ENCODE measurements at regions of chr2 and their contacts with region 1.

Region 1: DNA sequence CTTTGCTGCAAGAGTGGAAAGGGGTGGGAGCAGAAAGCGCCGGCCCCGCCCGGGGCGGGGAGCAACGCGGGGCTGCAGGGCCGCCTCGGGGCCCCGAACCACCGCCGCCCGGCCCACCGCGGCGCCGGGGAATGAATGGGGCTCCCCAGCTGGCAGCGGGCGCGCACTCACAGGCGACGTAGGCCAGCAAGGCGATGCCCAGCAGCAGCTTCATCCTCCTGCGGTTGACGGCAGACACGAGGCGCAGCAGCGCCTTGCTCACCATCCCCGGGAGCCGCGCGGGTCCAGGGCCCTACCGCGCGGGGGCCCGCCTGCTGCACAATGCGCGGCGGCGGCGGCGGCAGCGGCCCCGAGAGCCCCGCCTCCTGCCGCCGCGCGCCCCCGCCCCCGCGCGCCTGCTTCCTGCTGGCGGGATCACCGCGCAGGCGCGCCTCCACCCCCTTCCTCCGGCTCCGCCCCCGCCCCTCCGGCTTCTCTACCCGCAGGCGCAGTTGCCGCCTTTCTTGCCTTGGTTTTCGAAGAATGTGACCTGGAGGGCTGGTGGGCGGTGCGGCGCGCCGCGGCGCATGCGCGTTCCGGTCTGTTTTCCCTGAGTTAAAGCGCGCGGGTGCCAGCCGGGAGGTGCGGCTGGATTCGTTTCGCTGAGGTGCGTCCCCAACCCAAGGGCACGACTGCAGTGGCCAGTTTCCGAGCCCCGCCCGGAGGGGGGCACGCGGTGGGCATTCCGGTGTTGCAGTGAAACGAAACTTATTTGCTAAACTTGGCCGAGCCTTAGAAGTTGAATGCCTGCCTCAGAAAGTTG is at the start of gene UXS1:
- DNase-seq: peak; percentile 98
- ATAC-seq: peak; percentile 80
- H3K4me3 ChIP-seq: peak within 1 kb of the TSS; percentile 91 to 99 (median 95)
- H3K27ac ChIP-seq: peak within 1 kb of the TSS; percentile 64
- H3K4me1 ChIP-seq: peaks cover 63% of the 10 kb centered on the region
- H3K27me3 ChIP-seq: no peaks in the 10 kb centered on the region; a peak in 1 of 5 replicates
- CTCF ChIP-seq: no peak
- EP300 ChIP-seq: no peak
- POLR2A ChIP-seq: peak; percentile 72 to 87
- RAD21 ChIP-seq: peak; percentile 56
- total RNA-seq, gene UXS1: 35.4 and 53.3 TPM in 2 replicates

Region 2: GRCh38 chr2:105337124-105338019 is 856.8 kb before region 1 on chr2 and contains the start of gene C2orf49:
- CTCF ChIA-PET with region 1: no interaction called
- POLR2A ChIA-PET with region 1: no interaction called
- in situ Hi-C with region 1: loop called (anchors 25 kb)
- intact Hi-C with region 1: no loop called
- DNase-seq: peak; percentile 90
- ATAC-seq: peak; percentile 96
- H3K4me3 ChIP-seq: peak within 1 kb of the TSS; percentile 85 to 100 (median 99)
- H3K27ac ChIP-seq: peak within 1 kb of the TSS; percentile 100
- H3K4me1 ChIP-seq: peaks cover 38% of the 10 kb centered on the region
- H3K27me3 ChIP-seq: peaks cover 0 to 7% of the 10 kb centered on the region in 2 experiments; a peak in 2 of 5 replicates
- CTCF ChIP-seq: no peak
- EP300 ChIP-seq: peak in 1 of 2 experiments; percentile 68; a peak in 2 of 4 replicates
- POLR2A ChIP-seq: peak; percentile 85 to 88
- RAD21 ChIP-seq: no peak
- total RNA-seq, gene C2orf49: 28.8 and 35.6 TPM in 2 replicates

Region 3: DNA sequence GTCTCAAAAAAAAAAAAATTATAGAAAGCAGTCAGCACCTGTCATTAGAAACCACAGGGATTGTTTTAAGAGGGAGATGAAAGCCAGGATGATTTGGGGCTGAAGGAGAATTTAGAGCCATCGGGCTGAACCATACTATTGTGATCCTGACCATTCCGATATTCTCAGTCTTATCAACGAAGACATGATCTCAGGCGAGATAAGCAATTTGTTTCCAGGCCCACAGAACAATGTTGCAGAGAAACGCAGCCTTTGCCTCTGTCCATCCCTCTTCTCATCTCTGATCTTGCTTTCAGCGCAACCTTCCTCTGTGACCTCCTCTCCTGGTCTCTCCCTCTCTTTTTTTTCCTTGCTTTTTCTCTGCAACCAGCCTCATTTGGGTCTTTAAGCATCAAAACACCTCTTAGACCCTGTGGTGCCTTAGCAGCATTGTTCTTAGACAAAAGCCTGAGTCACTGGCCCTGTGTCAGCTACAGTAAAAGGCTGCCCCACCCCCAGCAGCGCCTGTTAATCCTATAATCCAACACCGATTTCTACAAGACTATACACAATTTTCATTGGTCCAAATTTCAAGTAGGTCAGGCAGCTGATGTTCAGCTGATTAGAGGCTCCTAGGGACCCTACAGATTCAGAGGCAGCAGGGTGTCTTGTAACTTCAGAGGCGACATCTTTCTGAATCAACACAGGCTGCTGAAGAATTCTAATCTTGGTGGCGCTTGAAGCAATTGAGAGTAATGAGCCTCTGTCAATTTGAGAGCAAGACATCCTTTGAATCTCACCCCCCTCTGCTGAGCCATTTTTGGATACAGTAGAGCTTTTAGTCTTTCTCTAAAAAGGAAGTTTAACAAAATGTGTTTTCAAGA is 243.4 kb before region 1 on chr2:
- CTCF ChIA-PET with region 1: no interaction called
- POLR2A ChIA-PET with region 1: no interaction called
- in situ Hi-C with region 1: no loop called
- intact Hi-C with region 1: no loop called
- DNase-seq: no peak
- ATAC-seq: no peak
- H3K4me3 ChIP-seq: no peak overlapping the region
- H3K27ac ChIP-seq: no peak overlapping the region
- H3K4me1 ChIP-seq: no peaks in the 10 kb centered on the region
- H3K27me3 ChIP-seq: peaks cover 3 to 44% of the 10 kb centered on the region in 2 experiments; a peak in 3 of 5 replicates
- CTCF ChIP-seq: no peak
- EP300 ChIP-seq: no peak
- POLR2A ChIP-seq: no peak
- RAD21 ChIP-seq: no peak

Region 4: GRCh38 chr2:106124905-106125405 is 69.2 kb before region 1 on chr2:
- CTCF ChIA-PET with region 1: no interaction called
- POLR2A ChIA-PET with region 1: interaction called, 17 read pairs
- in situ Hi-C with region 1: loop called (anchors 10 kb)
- intact Hi-C with region 1: loop called (anchors 5 kb)
- DNase-seq: peak; percentile 75
- ATAC-seq: peak; percentile 49
- H3K4me3 ChIP-seq: no peak overlapping the region
- H3K27ac ChIP-seq: peak overlapping the region; percentile 86
- H3K4me1 ChIP-seq: peaks cover 72% of the 10 kb centered on the region
- H3K27me3 ChIP-seq: no peaks in the 10 kb centered on the region
- CTCF ChIP-seq: no peak
- EP300 ChIP-seq: peak in 1 of 2 experiments; percentile 49; a peak in 1 of 4 replicates
- POLR2A ChIP-seq: no peak
- RAD21 ChIP-seq: no peak

Measured in HepG2 (cell line).